Breast epithelium (tissue), 4 donors: ENCODE measurements at regions of chr1 and their contacts with region 1.

Region 1: GRCh38 chr1:31510841-31511803 is 65.2 kb upstream of the TINAGL1 start:
- DNase-seq: peak; percentile 66
- H3K4me3 ChIP-seq: no peak overlapping the region
- H3K27ac ChIP-seq: peak overlapping the region; percentile 81 to 82
- H3K4me1 ChIP-seq: no peaks in the 10 kb centered on the region
- H3K27me3 ChIP-seq: no peaks in the 10 kb centered on the region
- CTCF ChIP-seq: no peak
- POLR2A ChIP-seq: no peak

Region 2: GRCh38 chr1:31482482-31483011 is 28.6 kb before region 1 on chr1:
- intact Hi-C with region 1: loop called (anchors 1 kb)
- DNase-seq: no peak
- H3K4me3 ChIP-seq: no peak overlapping the region
- H3K27ac ChIP-seq: peak overlapping the region; percentile 45 to 75
- H3K4me1 ChIP-seq: no peaks in the 10 kb centered on the region
- H3K27me3 ChIP-seq: no peaks in the 10 kb centered on the region
- CTCF ChIP-seq: no peak
- POLR2A ChIP-seq: no peak

Region 3: DNA sequence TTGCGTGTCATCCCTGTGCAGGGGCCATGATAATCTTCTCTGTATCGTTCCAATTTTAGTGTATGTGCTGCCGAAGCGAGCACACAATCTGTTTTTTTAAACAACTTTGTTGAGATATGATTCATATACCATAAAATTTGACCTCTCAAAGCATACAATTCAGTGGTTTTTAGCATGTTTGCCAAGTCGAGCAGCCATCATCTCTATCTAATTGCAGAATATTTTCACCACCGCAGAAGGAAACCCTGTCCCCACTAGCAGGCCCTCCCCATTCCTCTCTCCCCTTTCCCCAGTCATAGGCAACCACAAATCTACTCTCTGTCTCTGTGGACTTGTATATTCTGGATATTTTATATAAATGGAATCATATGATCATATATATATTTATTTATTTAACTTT is 13.5 kb before region 1 on chr1:
- intact Hi-C with region 1: no loop called
- DNase-seq: no peak
- H3K4me3 ChIP-seq: no peak overlapping the region
- H3K27ac ChIP-seq: no peak overlapping the region
- H3K4me1 ChIP-seq: no peaks in the 10 kb centered on the region
- H3K27me3 ChIP-seq: no peaks in the 10 kb centered on the region
- CTCF ChIP-seq: no peak
- POLR2A ChIP-seq: no peak